ENCODE measurements at regions of chr19 and their contacts with region 1.

Region 1: GRCh38 chr19:42596391-42597072 is 1.8 kb upstream of the CEACAM8 start:
- H3K4me3 ChIP-seq: no peak overlapping the region
- H3K27ac ChIP-seq: no peak overlapping the region
- H3K4me1 ChIP-seq: no peaks in the 10 kb centered on the region
- CTCF ChIP-seq: peak; percentile 94

Region 2: DNA sequence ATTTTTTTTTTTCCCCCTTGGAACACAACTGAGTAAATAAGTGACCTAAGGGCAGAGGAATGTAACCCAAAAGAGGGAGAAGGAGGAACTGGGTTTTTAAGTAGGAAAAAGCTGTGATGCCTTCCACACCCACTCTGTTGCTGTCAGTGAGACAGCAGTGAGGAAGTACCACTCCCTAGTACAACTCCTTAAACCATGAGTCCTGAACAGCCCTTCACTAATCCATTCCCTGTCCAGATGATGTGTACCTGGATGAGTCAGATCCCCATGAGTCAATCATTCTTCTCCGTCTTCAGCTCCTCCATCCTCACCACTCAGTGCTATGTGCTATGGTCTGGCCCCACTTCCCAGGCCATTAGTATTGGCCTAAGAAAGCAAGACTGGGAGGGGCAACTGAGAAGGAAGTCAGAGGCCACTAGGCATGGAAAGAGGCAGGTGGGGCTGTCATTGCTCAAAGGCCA is 140.9 kb before region 1 on chr19:
- CTCF ChIA-PET with region 1: interaction called, 36 read pairs
- POLR2A ChIA-PET with region 1: no interaction called
- H3K4me3 ChIP-seq: no peak overlapping the region
- H3K27ac ChIP-seq: no peak overlapping the region
- H3K4me1 ChIP-seq: peaks cover 3% of the 10 kb centered on the region; the same call in 1 of the 2 replicates
- CTCF ChIP-seq: no peak

Region 3: GRCh38 chr19:42548552-42548951 is 48.0 kb before region 1 on chr19:
- CTCF ChIA-PET with region 1: no interaction called
- POLR2A ChIA-PET with region 1: no interaction called
- H3K4me3 ChIP-seq: no peak overlapping the region
- H3K27ac ChIP-seq: no peak overlapping the region
- H3K4me1 ChIP-seq: no peaks in the 10 kb centered on the region
- CTCF ChIP-seq: no peak

Region 4: DNA sequence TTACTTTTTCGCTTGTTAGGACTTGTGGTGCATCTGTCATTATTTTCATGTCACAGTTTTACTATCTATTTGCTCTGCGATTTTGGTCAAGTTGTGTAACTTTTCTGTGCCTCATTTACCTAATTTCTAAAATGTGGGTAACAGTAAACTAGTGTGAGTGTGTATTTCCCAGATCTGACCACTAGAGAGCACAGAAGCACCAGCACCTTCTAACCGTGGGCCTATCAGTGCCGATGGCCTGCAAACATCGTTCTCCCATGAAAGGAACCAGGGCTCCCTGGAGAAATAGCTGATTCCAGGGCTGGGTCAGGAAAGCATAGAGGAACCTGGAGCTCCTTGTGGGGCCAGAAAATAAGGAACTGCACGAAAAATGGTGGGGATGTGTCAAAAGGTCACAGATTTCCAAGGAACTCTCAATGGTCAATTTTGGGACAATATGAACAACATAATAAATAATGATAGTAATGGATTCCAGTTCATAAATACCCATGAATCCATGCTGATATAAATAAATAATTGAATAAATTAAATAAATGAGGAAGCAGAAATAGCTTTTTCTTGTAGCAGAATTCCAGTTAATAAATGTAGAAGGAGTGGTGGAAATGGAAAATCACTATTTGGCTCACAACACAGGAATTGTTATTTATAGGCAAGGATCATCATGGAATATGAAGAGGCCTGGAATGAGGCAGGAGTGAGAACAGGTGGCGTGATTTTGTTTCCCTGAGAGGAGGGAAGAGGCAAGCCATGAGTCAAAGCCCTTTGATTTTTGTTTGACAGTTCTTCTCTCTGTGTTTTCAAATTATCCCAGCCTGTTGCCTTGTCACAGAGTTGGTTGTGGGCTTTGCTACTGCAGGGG is 33.0 kb before region 1 on chr19:
- CTCF ChIA-PET with region 1: interaction called, 80 read pairs
- POLR2A ChIA-PET with region 1: no interaction called
- H3K4me3 ChIP-seq: no peak overlapping the region
- H3K27ac ChIP-seq: no peak overlapping the region
- H3K4me1 ChIP-seq: no peaks in the 10 kb centered on the region
- CTCF ChIP-seq: peak; percentile 69; the same call in 1 of the 2 replicates

Region 5: GRCh38 chr19:42577016-42577415 is 19.5 kb before region 1 on chr19:
- CTCF ChIA-PET with region 1: interaction called, 29 read pairs
- POLR2A ChIA-PET with region 1: no interaction called
- H3K4me3 ChIP-seq: no peak overlapping the region
- H3K27ac ChIP-seq: no peak overlapping the region
- H3K4me1 ChIP-seq: no peaks in the 10 kb centered on the region
- CTCF ChIP-seq: no peak

Region 6: GRCh38 chr19:42606660-42607351 is 10.3 kb after region 1 on chr19:
- CTCF ChIA-PET with region 1: interaction called, 41 read pairs
- POLR2A ChIA-PET with region 1: no interaction called
- H3K4me3 ChIP-seq: no peak overlapping the region
- H3K27ac ChIP-seq: no peak overlapping the region
- H3K4me1 ChIP-seq: no peaks in the 10 kb centered on the region
- CTCF ChIP-seq: peak; percentile 91

Region 7: GRCh38 chr19:42634409-42635232 is 38.1 kb after region 1 on chr19:
- CTCF ChIA-PET with region 1: interaction called, 18 read pairs
- POLR2A ChIA-PET with region 1: no interaction called
- H3K4me3 ChIP-seq: no peak overlapping the region
- H3K27ac ChIP-seq: no peak overlapping the region
- H3K4me1 ChIP-seq: no peaks in the 10 kb centered on the region
- CTCF ChIP-seq: peak; percentile 86